ENCODE measurements at regions of chr19 and their contacts with region 1.

Region 1: DNA sequence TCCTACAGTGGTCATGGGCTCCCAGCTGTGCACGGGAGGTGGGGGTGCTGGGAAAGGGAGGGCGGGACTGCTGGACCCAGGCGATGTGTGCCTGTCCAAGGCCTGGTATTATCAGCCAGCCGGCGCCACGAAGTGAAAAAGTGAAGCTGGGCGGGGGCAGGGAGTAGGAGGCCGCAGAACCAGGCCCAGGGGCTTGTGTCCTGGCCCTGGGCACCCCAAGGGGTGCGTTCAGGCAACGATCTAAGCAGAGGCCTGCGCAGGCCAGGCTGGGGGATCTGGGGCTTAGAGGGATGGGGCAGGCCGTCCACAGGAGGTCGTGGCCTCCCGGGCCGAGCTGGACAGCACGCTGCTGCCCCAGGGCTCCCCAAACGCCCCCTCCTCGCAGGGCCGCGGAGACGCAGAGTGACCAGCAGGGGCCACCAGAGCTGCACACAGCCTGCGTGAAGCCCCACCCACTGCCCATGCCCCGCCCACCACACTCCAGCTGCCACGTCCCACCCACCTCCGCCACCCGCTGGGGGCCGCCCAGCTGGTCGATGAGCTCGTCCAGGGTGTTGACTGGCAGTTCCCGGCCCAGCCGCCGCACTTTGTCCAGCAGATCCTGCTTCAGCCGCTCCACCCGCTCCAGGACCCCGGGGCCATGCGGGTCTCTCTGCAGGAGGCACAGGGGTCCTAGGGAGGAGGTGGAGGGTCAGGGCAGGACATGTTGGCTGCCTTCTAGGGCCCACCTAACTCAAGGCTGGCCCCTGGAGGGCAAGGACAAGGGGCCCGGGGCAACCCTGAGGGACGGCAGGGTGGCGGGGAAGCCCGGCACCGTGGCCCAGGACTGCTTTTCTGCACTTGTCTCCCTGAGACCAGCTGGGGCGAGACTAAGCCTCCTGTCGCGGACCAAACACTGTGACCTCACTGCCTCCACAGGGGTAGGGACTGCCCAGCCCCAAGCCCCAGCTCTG is 9.5 kb downstream of the GPX4 start:
- DNase-seq: peak; percentile 72 to 91
- ATAC-seq: peak; percentile 42 to 74
- H3K4me3 ChIP-seq: no peak overlapping the region
- H3K27ac ChIP-seq: peak overlapping the region; percentile 55 to 84; a peak in 5 of 6 replicates
- H3K4me1 ChIP-seq: peaks cover 26% of the 10 kb centered on the region
- CTCF ChIP-seq: peak; percentile 70
- EP300 ChIP-seq: no peak
- POLR2A ChIP-seq: no peak
- RAD21 ChIP-seq: peak; percentile 66 to 88

Region 2: DNA sequence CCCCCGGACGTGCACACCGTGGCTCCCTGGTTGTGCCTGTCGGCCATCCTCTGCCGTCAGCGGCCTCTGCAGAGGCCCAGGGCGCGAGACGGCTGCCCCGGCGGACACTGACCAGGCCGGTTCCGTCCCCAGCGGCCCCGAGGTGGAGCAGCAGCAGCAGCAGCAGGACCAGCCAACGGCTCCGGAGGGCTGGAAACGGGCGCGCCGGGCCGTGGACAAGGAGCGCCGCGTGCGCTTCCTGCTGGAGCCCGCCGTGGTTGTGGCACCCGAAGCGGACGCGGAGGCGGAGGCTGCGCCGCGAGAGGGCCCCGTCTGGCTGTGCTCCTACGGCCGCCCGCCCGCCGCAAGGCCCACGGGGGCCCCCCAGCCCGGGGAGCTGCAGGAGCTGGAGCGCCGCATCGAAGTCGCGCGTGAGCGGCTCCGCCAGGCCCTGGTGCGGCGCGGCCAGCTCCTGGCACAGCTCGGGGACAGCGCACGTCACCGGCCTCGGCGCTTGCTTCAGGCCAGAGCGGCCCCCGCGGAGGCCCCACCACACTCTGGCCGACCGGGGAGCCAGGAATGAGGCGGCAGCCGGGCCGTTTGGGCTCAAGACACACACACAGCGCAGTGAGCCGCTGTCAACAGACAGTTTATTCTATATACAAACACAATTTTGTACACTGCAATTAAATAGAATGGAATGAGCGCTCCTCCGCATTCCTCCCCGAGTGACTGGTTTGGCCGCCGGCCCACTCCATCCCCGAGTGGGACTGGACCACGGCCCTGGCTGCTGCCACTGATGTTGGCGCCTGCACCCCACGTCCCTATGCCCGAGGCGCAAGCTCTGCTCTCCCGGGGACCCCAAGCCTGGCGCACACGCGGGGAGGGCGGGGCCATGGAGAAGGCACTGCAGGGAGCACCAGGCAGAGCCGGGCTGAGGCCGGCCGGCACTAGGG is 104.0 kb before region 1 on chr19:
- CTCF ChIA-PET with region 1: no interaction called
- POLR2A ChIA-PET with region 1: no interaction called
- DNase-seq: no peak
- ATAC-seq: no peak
- H3K4me3 ChIP-seq: no peak overlapping the region
- H3K27ac ChIP-seq: no peak overlapping the region
- H3K4me1 ChIP-seq: no peaks in the 10 kb centered on the region
- CTCF ChIP-seq: no peak
- EP300 ChIP-seq: no peak
- POLR2A ChIP-seq: no peak
- RAD21 ChIP-seq: no peak

Region 3: DNA sequence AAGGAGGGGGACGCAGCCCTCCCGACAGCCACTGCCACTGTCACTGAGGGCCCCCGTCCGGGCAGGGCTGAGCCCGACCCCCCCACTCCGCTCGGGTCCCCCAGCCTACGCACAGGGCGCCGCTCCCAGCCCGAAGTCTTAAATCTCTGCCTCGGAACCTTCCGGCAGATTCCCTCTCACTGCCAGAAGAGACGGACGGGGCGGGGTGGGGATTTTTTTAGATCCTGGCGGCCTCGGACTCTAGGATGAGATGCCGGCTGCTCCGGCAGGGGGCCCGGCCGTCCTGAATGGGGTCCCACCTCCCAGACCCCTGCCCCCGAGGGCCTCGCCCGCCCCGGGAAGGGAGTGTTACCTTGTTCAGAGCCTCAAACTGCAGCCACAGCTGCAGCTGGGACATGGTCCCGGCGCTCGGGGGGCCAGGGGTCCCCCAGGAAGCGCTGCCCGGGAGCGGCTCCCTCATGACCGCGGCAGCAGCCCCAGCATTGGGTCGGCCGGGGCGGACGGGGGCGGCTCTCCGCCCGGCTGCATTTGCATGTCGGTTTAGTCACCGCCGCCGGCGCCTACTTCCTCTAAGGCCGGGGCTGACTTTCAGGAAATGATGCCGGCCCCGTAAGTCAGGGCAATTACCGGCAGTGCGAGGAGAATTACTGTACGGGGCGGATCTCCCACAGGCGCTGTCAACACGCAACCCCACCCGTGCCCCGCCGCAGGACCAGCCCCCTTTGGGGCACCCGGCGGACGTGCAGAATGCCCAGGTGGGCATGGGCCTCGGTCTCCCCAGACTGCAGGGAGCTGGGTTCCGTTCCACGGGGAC is 18.6 kb after region 1 on chr19:
- CTCF ChIA-PET with region 1: interaction called, 29 read pairs
- POLR2A ChIA-PET with region 1: no interaction called
- DNase-seq: peak in 1 of 2 experiments; percentile 64
- ATAC-seq: peak; percentile 52 to 63; a peak in 5 of 6 replicates
- H3K4me3 ChIP-seq: peak overlapping the region; percentile 26; the same call in 2 of the 3 replicates
- H3K27ac ChIP-seq: peak overlapping the region; percentile 68 to 91
- H3K4me1 ChIP-seq: peaks cover 21% of the 10 kb centered on the region
- CTCF ChIP-seq: no peak
- EP300 ChIP-seq: no peak
- POLR2A ChIP-seq: no peak
- RAD21 ChIP-seq: no peak

Region 4: GRCh38 chr19:1173845-1174809 is 60.8 kb after region 1 on chr19 and contains the start of gene SBNO2:
- CTCF ChIA-PET with region 1: interaction called, 15 read pairs
- POLR2A ChIA-PET with region 1: no interaction called
- DNase-seq: peak; percentile 64 to 89
- ATAC-seq: peak; percentile 28 to 34; a peak in 4 of 6 replicates
- H3K4me3 ChIP-seq: peak within 1 kb of the TSS; percentile 98
- H3K27ac ChIP-seq: peak within 1 kb of the TSS; percentile 100
- H3K4me1 ChIP-seq: peaks cover 72% of the 10 kb centered on the region
- CTCF ChIP-seq: no peak
- EP300 ChIP-seq: no peak
- POLR2A ChIP-seq: peak; percentile 59
- RAD21 ChIP-seq: no peak
- polyA plus RNA-seq, gene SBNO2: 6.8 and 8.4 TPM in 2 replicates

Region 5: GRCh38 chr19:1189419-1189818 is 76.1 kb after region 1 on chr19:
- CTCF ChIA-PET with region 1: interaction called, 29 read pairs
- POLR2A ChIA-PET with region 1: no interaction called
- DNase-seq: peak in 1 of 2 experiments; percentile 71
- ATAC-seq: peak; percentile 67 to 77; a peak in 5 of 6 replicates
- H3K4me3 ChIP-seq: no peak overlapping the region
- H3K27ac ChIP-seq: peak overlapping the region; percentile 56 to 90
- H3K4me1 ChIP-seq: peaks cover 31% of the 10 kb centered on the region
- CTCF ChIP-seq: no peak
- EP300 ChIP-seq: no peak
- POLR2A ChIP-seq: no peak
- RAD21 ChIP-seq: no peak

Region 6: GRCh38 chr19:1223018-1223855 is 109.9 kb after region 1 on chr19:
- CTCF ChIA-PET with region 1: interaction called, 18 read pairs
- POLR2A ChIA-PET with region 1: no interaction called
- DNase-seq: peak in 1 of 2 experiments; percentile 61
- ATAC-seq: peak; percentile 52 to 73; a peak in 4 of 6 replicates
- H3K4me3 ChIP-seq: no peak overlapping the region
- H3K27ac ChIP-seq: peak overlapping the region in 1 of 2 experiments; percentile 43; a peak in 2 of 6 replicates
- H3K4me1 ChIP-seq: peaks cover 14% of the 10 kb centered on the region; the same call in 1 of the 3 replicates
- CTCF ChIP-seq: peak; percentile 52; the same call in 2 of the 3 replicates
- EP300 ChIP-seq: no peak
- POLR2A ChIP-seq: no peak
- RAD21 ChIP-seq: peak; percentile 50 to 54

Region 7: DNA sequence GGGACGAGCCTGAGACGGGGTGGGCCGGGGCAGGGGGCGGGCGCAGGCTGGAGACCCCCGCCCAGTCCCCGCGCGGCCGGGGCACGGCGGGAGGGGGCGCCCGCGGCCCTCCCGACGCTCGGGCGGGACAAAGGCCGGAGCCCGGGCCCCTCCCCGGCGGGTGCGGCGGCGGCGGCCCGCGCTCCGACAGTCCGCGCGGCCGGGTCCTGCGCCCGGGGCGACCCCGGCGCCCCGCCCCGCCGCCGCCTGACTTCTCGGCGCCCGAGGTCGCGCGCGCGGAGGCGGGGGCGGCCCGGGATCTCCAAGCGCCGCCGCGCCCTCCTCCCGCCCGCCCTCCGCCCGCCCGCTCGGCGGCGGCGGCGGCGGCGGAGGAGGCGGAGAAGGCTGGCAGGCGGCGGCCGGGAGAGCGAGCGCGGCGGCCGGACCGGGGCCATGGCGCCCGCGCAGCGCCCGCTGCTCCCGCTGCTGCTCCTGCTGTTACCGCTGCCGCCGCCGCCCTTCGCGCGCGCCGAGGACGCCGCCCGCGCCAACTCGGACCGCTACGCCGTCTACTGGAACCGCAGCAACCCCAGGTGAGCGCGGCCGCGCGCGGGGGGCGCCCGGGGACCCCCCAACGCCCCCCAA is 172.5 kb after region 1 on chr19 and contains the start of gene EFNA2:
- CTCF ChIA-PET with region 1: no interaction called
- POLR2A ChIA-PET with region 1: no interaction called
- DNase-seq: no peak
- ATAC-seq: no peak
- H3K4me3 ChIP-seq: peak within 1 kb of the TSS; percentile 62
- H3K27ac ChIP-seq: peak within 1 kb of the TSS; percentile 79 to 91
- H3K4me1 ChIP-seq: peaks cover 9% of the 10 kb centered on the region
- CTCF ChIP-seq: peak; percentile 50
- EP300 ChIP-seq: no peak
- POLR2A ChIP-seq: no peak
- RAD21 ChIP-seq: 0 out of 5 replicates have a peak, but pooled peaks of 1 of the 2 experiments have one; percentile 2
- polyA plus RNA-seq, gene EFNA2: 0.16 and 0.24 TPM in 2 replicates

Region 8: DNA sequence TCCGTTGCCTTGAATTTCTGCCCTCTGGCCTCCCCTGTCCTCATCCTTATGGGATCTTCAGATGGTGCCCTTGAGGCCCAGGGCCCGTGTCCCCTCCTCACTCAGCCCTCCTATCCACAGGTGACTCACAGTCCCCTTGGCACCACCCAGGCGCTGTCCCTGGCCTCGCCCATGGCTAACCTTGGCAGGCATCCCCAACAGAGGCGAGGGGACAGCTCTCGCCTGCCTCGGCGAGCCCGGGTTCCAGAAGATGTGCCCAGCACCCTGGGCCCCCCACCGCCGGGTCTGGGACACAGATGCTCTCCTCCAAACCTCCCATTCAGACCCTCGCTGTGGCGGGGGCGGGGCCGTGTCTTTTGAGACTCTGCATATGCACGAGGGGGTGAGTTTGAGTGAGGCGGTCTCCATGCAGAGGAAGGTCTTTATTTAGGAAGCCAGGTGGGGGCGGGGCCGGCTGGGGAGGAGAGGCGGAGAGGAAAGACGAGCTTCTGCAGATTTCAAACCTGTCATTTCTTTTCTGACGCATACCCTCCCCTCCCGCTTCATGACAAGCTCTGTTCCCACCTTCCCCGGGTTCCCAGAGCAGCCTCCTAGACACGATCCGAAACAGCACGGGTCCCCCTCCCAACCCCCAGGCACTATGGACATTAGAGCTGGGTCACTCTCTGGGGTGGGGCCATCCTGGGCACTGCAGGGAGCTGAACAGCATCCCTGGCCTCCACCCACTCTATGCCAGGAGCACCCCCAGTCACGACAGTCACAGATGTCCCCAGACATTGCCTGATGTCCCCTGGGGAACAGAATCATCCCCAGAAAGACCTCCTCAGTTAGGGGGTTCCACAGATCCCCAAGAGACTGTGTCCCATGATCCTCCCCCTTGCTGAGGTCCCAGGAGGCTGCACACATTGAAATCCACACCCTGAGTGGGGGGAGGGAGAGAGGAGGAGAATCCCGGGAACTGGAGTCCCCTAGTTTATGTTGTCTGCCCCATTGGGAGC is 1540.7 kb after region 1 on chr19:
- CTCF ChIA-PET with region 1: no interaction called
- POLR2A ChIA-PET with region 1: no interaction called
- DNase-seq: no peak
- ATAC-seq: no peak
- H3K4me3 ChIP-seq: no peak overlapping the region
- H3K27ac ChIP-seq: no peak overlapping the region
- H3K4me1 ChIP-seq: no peaks in the 10 kb centered on the region
- CTCF ChIP-seq: no peak
- EP300 ChIP-seq: no peak
- POLR2A ChIP-seq: no peak
- RAD21 ChIP-seq: no peak

Measured in A549 (cell line).